ENCODE measurements at regions of chr14 and their contacts with region 1.

Region 1: GRCh38 chr14:73759714-73760597 is 45.8 kb upstream of the PNMA1 start:
- DNase-seq: peak; percentile 98
- H3K4me3 Mint-ChIP-seq: peak overlapping the region; percentile 86
- H3K27ac Mint-ChIP-seq: peak overlapping the region; percentile 97
- H3K4me1 Mint-ChIP-seq: peaks cover 35% of the 10 kb centered on the region
- H3K27me3 Mint-ChIP-seq: no peaks in the 10 kb centered on the region
- CTCF ChIP-seq: peak; percentile 5

Region 2: GRCh38 chr14:73713803-73714655 is 45.9 kb before region 1 on chr14 and contains the start of gene PNMA1:
- CTCF ChIA-PET with region 1: no interaction called
- POLR2A ChIA-PET with region 1: interaction called, 23 read pairs
- intact Hi-C with region 1: no loop called
- DNase-seq: peak; percentile 79
- H3K4me3 Mint-ChIP-seq: peak within 1 kb of the TSS; percentile 86
- H3K27ac Mint-ChIP-seq: peak within 1 kb of the TSS; percentile 86
- H3K4me1 Mint-ChIP-seq: peaks cover 31% of the 10 kb centered on the region
- H3K27me3 Mint-ChIP-seq: no peaks in the 10 kb centered on the region
- CTCF ChIP-seq: no peak
- total RNA-seq, gene PNMA1: 43.3 and 46.3 TPM in 2 replicates

Region 3: GRCh38 chr14:73741386-73741875 is 18.5 kb before region 1 on chr14:
- CTCF ChIA-PET with region 1: interaction called, 24 read pairs
- POLR2A ChIA-PET with region 1: interaction called, 296 read pairs
- intact Hi-C with region 1: loop called (anchors 1 kb)
- DNase-seq: peak; percentile 84
- H3K4me3 Mint-ChIP-seq: peak overlapping the region; percentile 65
- H3K27ac Mint-ChIP-seq: peak overlapping the region; percentile 92
- H3K4me1 Mint-ChIP-seq: peaks cover 55% of the 10 kb centered on the region
- H3K27me3 Mint-ChIP-seq: no peaks in the 10 kb centered on the region
- CTCF ChIP-seq: no peak

Region 4: GRCh38 chr14:73771848-73772638 is 12.1 kb after region 1 on chr14:
- CTCF ChIA-PET with region 1: interaction called, 6 read pairs
- POLR2A ChIA-PET with region 1: interaction called, 132 read pairs
- intact Hi-C with region 1: no loop called
- DNase-seq: peak; percentile 83
- H3K4me3 Mint-ChIP-seq: no peak overlapping the region
- H3K27ac Mint-ChIP-seq: peak overlapping the region; percentile 51
- H3K4me1 Mint-ChIP-seq: peaks cover 38% of the 10 kb centered on the region
- H3K27me3 Mint-ChIP-seq: no peaks in the 10 kb centered on the region
- CTCF ChIP-seq: no peak

Region 5: DNA sequence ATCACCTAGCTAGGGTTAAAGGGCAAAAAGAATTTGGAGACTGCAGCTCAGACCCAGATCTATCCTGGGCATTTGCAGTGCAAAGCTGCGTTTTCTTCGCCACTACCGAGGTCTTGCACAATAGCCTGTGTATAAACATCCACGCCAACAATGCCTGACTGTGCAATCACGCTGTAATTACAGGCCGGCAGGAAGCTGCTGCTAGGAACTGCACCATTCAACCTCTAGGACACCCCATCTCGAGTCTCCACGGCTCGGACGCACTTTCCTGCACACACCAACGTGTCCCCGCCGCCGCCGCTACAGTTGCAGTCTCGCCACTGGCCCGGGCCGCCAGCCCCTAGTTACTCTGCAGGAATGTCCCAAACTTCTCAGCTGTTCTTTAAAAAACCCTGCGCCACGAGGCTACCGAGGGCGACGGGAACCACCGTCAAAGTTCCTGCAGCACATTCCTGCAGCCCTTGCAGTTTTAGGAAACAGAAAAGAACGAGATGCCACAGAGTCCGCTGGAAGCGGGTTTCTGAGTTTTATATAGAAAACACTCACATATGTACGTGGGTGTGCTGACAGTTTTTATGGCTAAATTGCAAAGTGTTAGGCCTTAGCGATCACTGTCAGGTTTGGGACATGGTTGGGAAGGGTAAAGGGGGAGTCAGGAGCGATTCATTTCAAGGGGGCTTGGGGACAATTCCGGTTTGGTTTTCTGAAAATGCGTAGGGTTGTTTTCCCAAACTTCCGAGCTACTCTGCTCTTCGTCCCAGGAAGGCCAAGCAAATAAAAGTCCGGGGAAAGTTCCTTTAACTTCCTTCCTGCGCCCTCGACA is 26.1 kb after region 1 on chr14:
- CTCF ChIA-PET with region 1: interaction called, 30 read pairs
- POLR2A ChIA-PET with region 1: interaction called, 480 read pairs
- intact Hi-C with region 1: loop called (anchors 1 kb)
- DNase-seq: peak; percentile 93
- H3K4me3 Mint-ChIP-seq: peak overlapping the region; percentile 81
- H3K27ac Mint-ChIP-seq: peak overlapping the region; percentile 78
- H3K4me1 Mint-ChIP-seq: peaks cover 61% of the 10 kb centered on the region
- H3K27me3 Mint-ChIP-seq: no peaks in the 10 kb centered on the region
- CTCF ChIP-seq: no peak

Region 6: GRCh38 chr14:73802431-73803188 is 42.7 kb after region 1 on chr14:
- CTCF ChIA-PET with region 1: interaction called, 23 read pairs
- POLR2A ChIA-PET with region 1: interaction called, 101 read pairs
- intact Hi-C with region 1: no loop called
- DNase-seq: peak; percentile 80
- H3K4me3 Mint-ChIP-seq: peak overlapping the region; percentile 47
- H3K27ac Mint-ChIP-seq: peak overlapping the region; percentile 86
- H3K4me1 Mint-ChIP-seq: peaks cover 25% of the 10 kb centered on the region
- H3K27me3 Mint-ChIP-seq: no peaks in the 10 kb centered on the region
- CTCF ChIP-seq: no peak

Region 7: DNA sequence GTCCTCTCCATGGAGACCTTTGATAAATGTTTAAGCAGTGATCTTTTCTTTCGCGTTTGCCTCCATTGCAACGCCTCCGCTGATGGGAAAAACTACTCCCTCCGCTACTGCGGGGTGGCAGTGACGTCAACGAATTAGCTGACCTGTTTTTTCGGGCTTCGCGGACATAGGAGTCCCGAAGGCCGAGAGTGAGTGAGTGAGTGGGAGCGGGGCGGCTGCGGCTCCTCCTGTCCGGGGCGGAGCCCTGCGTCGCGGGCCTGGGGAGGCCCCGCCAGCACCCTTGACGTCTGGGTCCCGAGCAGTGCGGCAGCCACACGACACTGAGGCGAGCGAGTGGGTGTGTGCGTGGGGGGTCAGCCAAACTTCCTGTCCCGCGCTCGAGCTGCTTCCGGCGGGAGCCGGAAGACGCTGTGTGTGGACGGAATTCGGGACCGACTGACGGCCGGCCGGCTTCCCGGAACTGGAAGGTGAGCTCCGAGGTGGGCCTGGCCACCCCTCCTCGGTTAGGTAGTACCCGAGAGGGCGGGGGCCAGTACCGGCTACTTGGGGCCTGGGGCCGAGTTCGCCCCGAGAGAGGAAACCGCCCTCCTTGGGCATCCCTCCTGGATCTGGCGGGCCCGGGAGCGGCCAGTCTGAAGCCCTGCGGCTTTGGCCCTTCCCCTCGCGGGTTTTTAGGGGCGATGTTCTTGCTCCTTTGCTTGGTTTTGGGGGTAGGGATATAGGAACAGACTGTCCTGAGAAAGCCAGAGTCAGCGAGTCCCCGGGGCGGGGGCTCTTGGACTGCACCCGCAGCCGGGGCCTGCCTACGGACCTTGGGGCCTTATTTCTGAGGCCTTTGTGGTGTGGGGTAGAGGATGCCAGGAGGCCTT is 126.7 kb after region 1 on chr14 and contains the start of gene ZNF410:
- CTCF ChIA-PET with region 1: interaction called, 3 read pairs
- POLR2A ChIA-PET with region 1: interaction called, 32 read pairs
- intact Hi-C with region 1: no loop called
- DNase-seq: peak; percentile 97
- H3K4me3 Mint-ChIP-seq: peak within 1 kb of the TSS; percentile 82
- H3K27ac Mint-ChIP-seq: peak within 1 kb of the TSS; percentile 93
- H3K4me1 Mint-ChIP-seq: peaks cover 30% of the 10 kb centered on the region
- H3K27me3 Mint-ChIP-seq: no peaks in the 10 kb centered on the region
- CTCF ChIP-seq: no peak
- total RNA-seq, gene ZNF410: 74.0 and 76.0 TPM in 2 replicates